ENCODE measurements at regions of chr2 and their contacts with region 1.

Region 1: GRCh38 chr2:123546353-123546752 is 478.7 kb upstream of the CNTNAP5 start:
- DNase-seq: peak; percentile 80
- ATAC-seq: peak; percentile 99
- H3K4me3 ChIP-seq: no peak overlapping the region
- H3K27ac ChIP-seq: peak overlapping the region; percentile 49
- H3K4me1 ChIP-seq: peaks cover 15% of the 10 kb centered on the region
- H3K27me3 ChIP-seq: no peaks in the 10 kb centered on the region
- CTCF ChIP-seq: no peak

Region 2: GRCh38 chr2:123502931-123503330 is 43.4 kb before region 1 on chr2:
- CTCF ChIA-PET with region 1: no interaction called
- POLR2A ChIA-PET with region 1: no interaction called
- intact Hi-C with region 1: loop called (anchors 2 kb)
- DNase-seq: peak; percentile 74
- ATAC-seq: peak; percentile 97
- H3K4me3 ChIP-seq: peak overlapping the region; percentile 18; the same call in 1 of the 2 replicates
- H3K27ac ChIP-seq: peak overlapping the region; percentile 73
- H3K4me1 ChIP-seq: peaks cover 14% of the 10 kb centered on the region
- H3K27me3 ChIP-seq: no peaks in the 10 kb centered on the region
- CTCF ChIP-seq: no peak

Region 3: GRCh38 chr2:123566291-123566946 is 20.1 kb after region 1 on chr2:
- CTCF ChIA-PET with region 1: no interaction called
- POLR2A ChIA-PET with region 1: no interaction called
- intact Hi-C with region 1: no loop called
- DNase-seq: peak; percentile 61
- ATAC-seq: peak; percentile 67
- H3K4me3 ChIP-seq: 0 out of 2 replicates have a peak overlapping the region, but pooled peaks have one; percentile 29
- H3K27ac ChIP-seq: peak overlapping the region; percentile 60
- H3K4me1 ChIP-seq: peaks cover 11% of the 10 kb centered on the region
- H3K27me3 ChIP-seq: no peaks in the 10 kb centered on the region
- CTCF ChIP-seq: no peak

Region 4: GRCh38 chr2:123717636-123718334 is 171.4 kb after region 1 on chr2:
- CTCF ChIA-PET with region 1: no interaction called
- POLR2A ChIA-PET with region 1: no interaction called
- intact Hi-C with region 1: loop called (anchors 1 kb)
- DNase-seq: no peak
- ATAC-seq: no peak
- H3K4me3 ChIP-seq: no peak overlapping the region
- H3K27ac ChIP-seq: no peak overlapping the region
- H3K4me1 ChIP-seq: peaks cover 37% of the 10 kb centered on the region
- H3K27me3 ChIP-seq: no peaks in the 10 kb centered on the region
- CTCF ChIP-seq: no peak

Region 5: GRCh38 chr2:123771928-123772632 is 225.7 kb after region 1 on chr2:
- CTCF ChIA-PET with region 1: no interaction called
- POLR2A ChIA-PET with region 1: no interaction called
- intact Hi-C with region 1: no loop called
- DNase-seq: peak; percentile 2
- ATAC-seq: peak; percentile 77
- H3K4me3 ChIP-seq: no peak overlapping the region
- H3K27ac ChIP-seq: no peak overlapping the region
- H3K4me1 ChIP-seq: no peaks in the 10 kb centered on the region
- H3K27me3 ChIP-seq: no peaks in the 10 kb centered on the region
- CTCF ChIP-seq: no peak

Region 6: GRCh38 chr2:123840016-123840415 is 293.7 kb after region 1 on chr2:
- CTCF ChIA-PET with region 1: no interaction called
- POLR2A ChIA-PET with region 1: no interaction called
- intact Hi-C with region 1: no loop called
- DNase-seq: peak; percentile 83
- ATAC-seq: peak; percentile 89
- H3K4me3 ChIP-seq: peak overlapping the region; percentile 44
- H3K27ac ChIP-seq: peak overlapping the region; percentile 92
- H3K4me1 ChIP-seq: peaks cover 18% of the 10 kb centered on the region; the same call in 1 of the 2 replicates
- H3K27me3 ChIP-seq: no peaks in the 10 kb centered on the region
- CTCF ChIP-seq: peak; percentile 60

Region 7: DNA sequence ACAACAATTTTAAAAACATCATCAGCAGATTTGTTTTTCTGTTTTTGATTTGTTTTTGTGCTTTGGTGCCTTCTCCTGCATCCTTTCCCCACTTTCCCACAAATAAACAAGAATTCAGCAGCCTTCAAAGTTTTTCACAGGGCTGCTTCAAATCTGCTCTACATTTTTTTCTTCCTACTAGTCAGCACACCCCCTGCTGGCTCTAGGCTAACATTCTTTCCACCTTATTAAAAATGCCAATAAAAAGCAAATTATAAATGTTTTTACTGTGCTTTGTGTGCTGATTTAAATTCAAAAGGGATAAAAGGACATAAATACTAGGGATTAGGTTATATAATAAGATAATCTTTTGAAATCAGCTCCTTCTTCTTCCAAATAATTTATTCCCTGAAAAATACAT is 472.5 kb after region 1 on chr2:
- CTCF ChIA-PET with region 1: no interaction called
- POLR2A ChIA-PET with region 1: no interaction called
- intact Hi-C with region 1: loop called (anchors 2 kb)
- DNase-seq: peak; percentile 36
- ATAC-seq: no peak; the same call in 1 of the 2 replicates
- H3K4me3 ChIP-seq: no peak overlapping the region
- H3K27ac ChIP-seq: no peak overlapping the region
- H3K4me1 ChIP-seq: no peaks in the 10 kb centered on the region
- H3K27me3 ChIP-seq: no peaks in the 10 kb centered on the region
- CTCF ChIP-seq: peak; percentile 67